ENCODE measurements at regions of chr19 and their contacts with region 1.

Region 1: GRCh38 chr19:42199440-42200115 is 17.9 kb downstream of the DEDD2 start:
- DNase-seq: peak; percentile 86
- H3K4me3 Mint-ChIP-seq: peak overlapping the region; percentile 74
- H3K27ac Mint-ChIP-seq: peak overlapping the region; percentile 95
- H3K4me1 Mint-ChIP-seq: peaks cover 87% of the 10 kb centered on the region
- H3K27me3 Mint-ChIP-seq: no peaks in the 10 kb centered on the region

Region 2: GRCh38 chr19:42184401-42184861 is 15.1 kb before region 1 on chr19:
- CTCF ChIA-PET with region 1: interaction called, 16 read pairs
- POLR2A ChIA-PET with region 1: interaction called, 3 read pairs
- DNase-seq: peak; percentile 71
- H3K4me3 Mint-ChIP-seq: no peak overlapping the region
- H3K27ac Mint-ChIP-seq: peak overlapping the region; percentile 63
- H3K4me1 Mint-ChIP-seq: peaks cover 45% of the 10 kb centered on the region
- H3K27me3 Mint-ChIP-seq: peaks cover 8% of the 10 kb centered on the region

Region 3: GRCh38 chr19:42217520-42218437 is 18.2 kb after region 1 on chr19 and contains the start of gene DEDD2:
- CTCF ChIA-PET with region 1: interaction called, 20 read pairs
- POLR2A ChIA-PET with region 1: interaction called, 3 read pairs
- DNase-seq: peak; percentile 99
- H3K4me3 Mint-ChIP-seq: peak within 1 kb of the TSS; percentile 94
- H3K27ac Mint-ChIP-seq: peak within 1 kb of the TSS; percentile 95
- H3K4me1 Mint-ChIP-seq: peaks cover 79% of the 10 kb centered on the region
- H3K27me3 Mint-ChIP-seq: no peaks in the 10 kb centered on the region
- total RNA-seq, gene DEDD2: 37.2 to 42.4 TPM

Region 4: DNA sequence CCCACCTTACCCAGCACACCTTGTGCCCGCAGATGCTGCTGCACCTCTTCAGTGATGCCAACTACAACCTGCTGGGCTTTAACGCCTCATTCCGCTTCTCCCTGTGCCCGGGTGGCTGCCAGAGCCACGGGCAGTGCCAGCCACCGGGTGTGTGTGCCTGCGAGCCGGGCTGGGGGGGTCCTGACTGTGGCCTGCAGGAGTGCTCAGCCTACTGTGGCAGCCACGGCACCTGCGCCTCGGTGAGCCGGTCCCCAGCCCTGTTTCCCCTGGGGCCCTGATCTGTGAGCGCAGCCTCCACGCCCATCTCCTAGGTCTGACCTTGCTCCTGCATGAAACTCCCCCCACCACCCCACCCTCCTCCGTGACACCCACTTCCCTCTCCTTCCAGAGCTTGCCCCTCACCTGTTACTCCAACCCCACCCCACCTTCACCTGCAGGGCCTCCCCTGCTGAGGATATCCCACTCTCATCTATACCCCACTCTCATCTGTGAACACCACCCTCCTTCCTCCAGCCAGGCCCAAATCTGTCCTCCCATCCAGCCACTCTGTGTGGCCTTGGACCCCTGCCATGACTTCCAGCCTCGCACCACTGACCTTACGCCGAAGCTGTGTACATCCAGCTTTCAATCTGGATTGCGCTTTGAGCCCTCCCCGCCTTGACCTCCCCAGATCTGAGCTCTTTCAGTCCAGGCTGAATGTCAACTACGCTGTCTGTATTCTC is 134.6 kb after region 1 on chr19:
- CTCF ChIA-PET with region 1: no interaction called
- POLR2A ChIA-PET with region 1: no interaction called
- DNase-seq: no peak
- H3K4me3 Mint-ChIP-seq: no peak overlapping the region
- H3K27ac Mint-ChIP-seq: no peak overlapping the region
- H3K4me1 Mint-ChIP-seq: no peaks in the 10 kb centered on the region
- H3K27me3 Mint-ChIP-seq: no peaks in the 10 kb centered on the region